HCT116 (cell line): ENCODE measurements at regions of chr7 and their contacts with region 1.

Region 1: DNA sequence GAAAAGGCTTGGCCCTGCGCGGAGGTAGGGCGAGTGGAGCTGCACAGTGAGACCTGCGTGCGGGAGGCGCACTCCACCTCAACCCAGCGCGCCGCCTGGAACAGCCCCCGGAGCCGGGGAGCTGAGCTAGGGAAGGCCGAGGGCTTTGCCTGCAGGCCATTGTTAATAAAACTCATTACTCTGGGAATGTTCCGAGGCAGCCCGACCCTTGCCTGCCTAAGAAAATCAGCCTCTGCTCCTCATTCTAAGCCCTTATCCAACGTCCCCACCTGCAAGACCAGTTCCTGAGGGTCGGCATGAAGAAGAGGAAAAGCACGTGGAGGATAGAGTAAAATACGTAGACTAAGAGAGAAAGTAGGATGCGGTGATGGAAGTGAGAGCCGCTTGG is 55.3 kb downstream of the C7orf25 start:
- DNase-seq: no peak
- ATAC-seq: no peak
- H3K4me3 ChIP-seq: no peak overlapping the region
- H3K27ac ChIP-seq: no peak overlapping the region
- H3K4me1 ChIP-seq: no peaks in the 10 kb centered on the region
- H3K27me3 ChIP-seq: peaks cover 18% of the 10 kb centered on the region
- CTCF ChIP-seq: no peak
- POLR2A ChIP-seq: no peak
- RAD21 ChIP-seq: no peak

Region 2: DNA sequence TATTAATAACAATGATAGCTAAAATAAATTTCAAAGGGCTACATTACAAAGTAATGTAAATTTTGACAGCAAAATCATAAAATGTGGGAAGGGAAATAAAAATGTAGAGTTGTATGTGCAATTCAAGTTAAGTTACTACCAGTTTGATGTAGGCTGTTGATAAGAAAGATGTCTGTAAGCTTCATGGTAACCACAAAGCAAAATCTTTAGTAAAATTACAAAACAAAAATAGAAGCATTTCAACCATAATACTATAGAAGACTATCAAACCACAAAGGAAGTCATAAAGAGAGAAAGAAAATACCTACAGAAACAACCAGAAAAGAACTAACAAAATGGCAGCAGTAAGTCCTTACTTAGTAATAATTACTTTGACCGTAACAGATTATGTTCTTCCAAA is 43.8 kb before region 1 on chr7:
- CTCF ChIA-PET with region 1: no interaction called
- POLR2A ChIA-PET with region 1: no interaction called
- RAD21 ChIA-PET with region 1: no interaction called
- intact Hi-C with region 1: loop called (anchors 1 kb)
- DNase-seq: no peak
- ATAC-seq: no peak
- H3K4me3 ChIP-seq: no peak overlapping the region
- H3K27ac ChIP-seq: no peak overlapping the region
- H3K4me1 ChIP-seq: no peaks in the 10 kb centered on the region
- H3K27me3 ChIP-seq: no peaks in the 10 kb centered on the region
- CTCF ChIP-seq: no peak
- POLR2A ChIP-seq: no peak
- RAD21 ChIP-seq: no peak